Activated CD8-positive, alpha-beta T cell treated with anti-CD3 and anti-CD28 coated beads for 36 hours (primary cell): ENCODE measurements at regions of chr2 and their contacts with region 1.

Region 1: GRCh38 chr2:54665436-54665856 is 58.0 kb upstream of the EML6 start:
- DNase-seq: peak; percentile 75
- ATAC-seq: peak; percentile 89
- H3K4me3 Mint-ChIP-seq: no peak overlapping the region
- H3K27ac Mint-ChIP-seq: peak overlapping the region; percentile 82
- H3K4me1 Mint-ChIP-seq: peaks cover 8% of the 10 kb centered on the region
- H3K27me3 Mint-ChIP-seq: no peaks in the 10 kb centered on the region
- CTCF ChIP-seq: peak; percentile 72

Region 2: GRCh38 chr2:54247115-54247514 is 418.3 kb before region 1 on chr2:
- CTCF ChIA-PET with region 1: no interaction called
- POLR2A ChIA-PET with region 1: no interaction called
- intact Hi-C with region 1: no loop called
- DNase-seq: no peak
- ATAC-seq: no peak
- H3K4me3 Mint-ChIP-seq: no peak overlapping the region
- H3K27ac Mint-ChIP-seq: no peak overlapping the region
- H3K4me1 Mint-ChIP-seq: no peaks in the 10 kb centered on the region
- H3K27me3 Mint-ChIP-seq: no peaks in the 10 kb centered on the region
- CTCF ChIP-seq: no peak

Region 3: DNA sequence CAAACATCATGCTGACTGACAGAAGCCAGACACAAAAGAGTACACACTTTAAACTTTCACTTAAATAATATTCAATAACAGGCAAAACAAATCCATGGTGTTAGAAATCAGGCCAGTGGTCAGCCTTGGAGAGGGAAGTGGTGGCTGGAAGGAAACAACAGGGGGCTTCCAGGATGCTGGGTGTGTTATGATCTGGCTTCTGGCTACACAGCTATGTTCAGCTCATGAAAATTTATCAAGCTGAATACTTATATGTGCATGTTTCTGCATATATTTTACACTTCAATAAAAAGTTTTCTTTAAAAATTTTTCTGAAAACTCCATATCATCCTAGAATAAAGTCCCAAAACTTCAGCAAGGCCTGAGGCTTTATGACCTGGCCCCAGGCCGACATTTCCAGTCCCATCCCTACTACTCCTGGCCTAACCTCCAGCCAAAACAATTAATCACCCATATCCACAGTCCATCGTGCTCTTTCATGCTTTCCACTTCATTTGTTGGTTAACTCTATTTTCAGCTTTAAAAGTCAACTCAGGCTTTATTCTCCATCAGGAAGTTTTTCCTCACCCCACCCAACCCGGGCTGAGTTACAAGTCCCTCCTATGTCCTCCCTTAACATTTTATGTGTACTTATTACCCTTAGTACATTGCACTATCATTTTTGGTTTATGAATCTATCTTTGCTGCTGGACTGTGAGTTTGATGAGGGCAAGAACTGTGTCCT is 237.2 kb before region 1 on chr2:
- CTCF ChIA-PET with region 1: no interaction called
- POLR2A ChIA-PET with region 1: no interaction called
- intact Hi-C with region 1: no loop called
- DNase-seq: no peak
- ATAC-seq: no peak
- H3K4me3 Mint-ChIP-seq: no peak overlapping the region
- H3K27ac Mint-ChIP-seq: no peak overlapping the region
- H3K4me1 Mint-ChIP-seq: peaks cover 4% of the 10 kb centered on the region
- H3K27me3 Mint-ChIP-seq: no peaks in the 10 kb centered on the region
- CTCF ChIP-seq: no peak

Region 4: DNA sequence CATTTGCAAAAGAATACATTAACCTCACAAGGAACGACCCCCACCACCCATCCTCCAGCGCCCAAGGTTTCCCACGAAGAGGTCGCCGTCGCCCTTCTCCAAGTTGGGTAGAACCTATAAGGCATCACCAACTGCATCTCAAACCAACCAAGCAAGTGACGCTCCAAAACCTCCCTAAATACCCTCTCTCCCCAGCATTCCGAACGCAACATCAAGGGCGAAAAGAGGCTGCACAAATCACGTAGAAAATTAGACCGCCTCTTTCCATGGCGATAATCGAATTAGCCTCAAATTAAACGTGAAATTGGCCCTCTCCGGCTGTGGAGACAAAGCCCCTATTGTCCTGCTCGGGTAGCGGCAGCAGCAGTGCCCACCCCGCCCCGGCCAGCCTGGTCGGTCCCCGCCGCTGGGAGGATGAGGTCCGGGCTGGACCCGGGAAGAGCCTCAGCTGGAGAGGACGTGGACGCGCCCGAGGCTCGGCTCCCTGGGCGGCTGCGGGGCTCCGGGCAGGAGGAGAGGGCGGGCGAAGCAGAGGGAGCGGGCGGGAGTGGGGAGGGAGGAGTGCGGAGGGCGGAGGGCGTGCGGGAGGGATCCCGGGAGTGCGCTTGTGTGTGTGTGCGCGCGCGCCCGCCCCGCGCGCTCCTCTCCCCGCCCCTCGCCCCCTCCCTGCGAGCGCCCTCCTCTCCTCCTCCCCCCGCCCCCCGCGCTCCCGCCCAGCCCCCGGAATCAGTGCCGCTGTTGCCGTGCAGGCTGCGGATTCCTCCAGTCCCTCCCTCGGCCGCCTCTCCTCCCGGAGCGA is 209.7 kb before region 1 on chr2 and contains the start of gene SPTBN1:
- CTCF ChIA-PET with region 1: no interaction called
- POLR2A ChIA-PET with region 1: no interaction called
- intact Hi-C with region 1: no loop called
- DNase-seq: peak; percentile 37
- ATAC-seq: peak; percentile 50
- H3K4me3 Mint-ChIP-seq: peak within 1 kb of the TSS; percentile 75
- H3K27ac Mint-ChIP-seq: no peak within 1 kb of the TSS
- H3K4me1 Mint-ChIP-seq: peaks cover 16% of the 10 kb centered on the region
- H3K27me3 Mint-ChIP-seq: peaks cover 38% of the 10 kb centered on the region
- CTCF ChIP-seq: no peak
- total RNA-seq, gene SPTBN1: 91.8 to 91.9 TPM

Region 5: DNA sequence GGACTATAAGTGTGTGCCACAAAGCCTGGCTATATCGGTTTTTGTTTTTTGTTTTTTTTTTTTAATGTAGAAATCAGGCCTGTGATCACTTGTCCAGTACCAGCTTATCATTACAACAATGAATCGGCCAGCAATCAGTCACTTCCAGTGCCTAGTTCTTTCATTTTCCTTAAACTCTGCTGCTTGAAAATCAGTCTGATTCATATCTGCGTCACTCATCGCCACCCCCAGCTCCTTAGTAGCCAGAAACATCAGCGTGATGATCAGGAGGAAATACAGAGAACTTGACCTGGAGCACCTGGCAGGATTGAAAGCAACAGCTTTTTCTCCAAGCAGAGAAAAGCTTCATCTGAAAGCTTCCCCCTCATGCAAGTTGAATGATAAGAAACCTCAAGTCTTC is 133.9 kb before region 1 on chr2:
- CTCF ChIA-PET with region 1: interaction called, 20 read pairs
- POLR2A ChIA-PET with region 1: no interaction called
- intact Hi-C with region 1: no loop called
- DNase-seq: no peak
- ATAC-seq: no peak
- H3K4me3 Mint-ChIP-seq: no peak overlapping the region
- H3K27ac Mint-ChIP-seq: no peak overlapping the region
- H3K4me1 Mint-ChIP-seq: peaks cover 3% of the 10 kb centered on the region
- H3K27me3 Mint-ChIP-seq: no peaks in the 10 kb centered on the region
- CTCF ChIP-seq: no peak

Region 6: DNA sequence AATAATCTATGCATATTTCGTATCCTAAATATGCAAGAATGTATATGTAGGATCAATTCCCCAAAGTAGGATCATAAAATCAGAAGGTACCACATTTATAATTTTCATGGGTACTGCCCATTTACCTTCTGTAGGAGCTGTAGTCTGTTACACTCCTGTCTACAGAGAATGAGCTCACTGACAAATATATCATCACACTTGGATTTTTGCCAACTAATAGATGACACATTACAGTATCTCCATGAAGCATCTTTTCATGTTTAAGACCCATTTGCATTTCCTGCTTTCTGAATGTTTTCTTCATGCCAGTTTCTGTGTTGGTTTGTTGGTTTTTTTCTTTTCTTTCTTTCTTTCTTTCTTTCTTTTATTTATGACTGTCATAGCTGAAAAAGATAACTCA is 12.9 kb before region 1 on chr2:
- CTCF ChIA-PET with region 1: interaction called, 28 read pairs
- POLR2A ChIA-PET with region 1: interaction called, 3 read pairs
- intact Hi-C with region 1: no loop called
- DNase-seq: no peak
- ATAC-seq: peak; percentile 70
- H3K4me3 Mint-ChIP-seq: no peak overlapping the region
- H3K27ac Mint-ChIP-seq: peak overlapping the region; percentile 22
- H3K4me1 Mint-ChIP-seq: peaks cover 8% of the 10 kb centered on the region
- H3K27me3 Mint-ChIP-seq: no peaks in the 10 kb centered on the region
- CTCF ChIP-seq: no peak

Region 7: GRCh38 chr2:54699665-54700064 is 34.2 kb after region 1 on chr2:
- CTCF ChIA-PET with region 1: interaction called, 218 read pairs
- POLR2A ChIA-PET with region 1: interaction called, 4 read pairs
- intact Hi-C with region 1: loop called (anchors 2 kb)
- DNase-seq: no peak
- ATAC-seq: no peak
- H3K4me3 Mint-ChIP-seq: no peak overlapping the region
- H3K27ac Mint-ChIP-seq: no peak overlapping the region
- H3K4me1 Mint-ChIP-seq: peaks cover 9% of the 10 kb centered on the region
- H3K27me3 Mint-ChIP-seq: no peaks in the 10 kb centered on the region
- CTCF ChIP-seq: no peak

Region 8: DNA sequence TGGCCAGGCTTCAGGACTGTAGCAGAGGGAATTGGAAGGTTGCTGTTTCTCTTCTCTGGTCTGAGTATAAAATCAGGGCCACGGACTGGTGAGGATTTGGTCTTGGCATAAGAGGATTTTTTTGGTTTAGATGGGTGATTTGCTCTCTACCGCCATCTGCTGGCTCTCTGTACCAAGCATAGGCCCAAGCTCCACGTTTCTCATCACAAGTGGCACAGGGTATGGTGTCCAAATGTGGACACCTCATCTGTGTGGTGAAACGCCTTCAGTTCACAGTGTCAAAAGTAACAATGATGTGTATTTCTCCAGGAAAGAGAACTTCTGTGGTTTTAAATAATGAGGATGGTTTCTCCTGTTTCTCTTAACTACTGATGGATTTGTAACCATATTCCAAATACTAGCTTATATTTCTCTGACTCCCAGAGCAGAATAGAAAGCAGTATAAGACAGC is 173.2 kb after region 1 on chr2:
- CTCF ChIA-PET with region 1: interaction called, 32 read pairs
- POLR2A ChIA-PET with region 1: no interaction called
- intact Hi-C with region 1: no loop called
- DNase-seq: peak; percentile 77
- ATAC-seq: peak; percentile 92
- H3K4me3 Mint-ChIP-seq: no peak overlapping the region
- H3K27ac Mint-ChIP-seq: no peak overlapping the region
- H3K4me1 Mint-ChIP-seq: no peaks in the 10 kb centered on the region
- H3K27me3 Mint-ChIP-seq: no peaks in the 10 kb centered on the region
- CTCF ChIP-seq: peak; percentile 96